ENCODE measurements at regions of chr12 and their contacts with region 1.

Region 1: GRCh38 chr12:46153268-46153872 is 115.5 kb downstream of the SLC38A1 start:
- DNase-seq: peak; percentile 56
- ATAC-seq: no peak
- H3K4me3 ChIP-seq: peak overlapping the region in 1 of 5 experiments; percentile 12
- H3K4me3 Mint-ChIP-seq: no peak overlapping the region
- H3K27ac ChIP-seq: no peak overlapping the region
- H3K27ac Mint-ChIP-seq: no peak overlapping the region
- H3K4me1 ChIP-seq: peaks cover 11 to 16% of the 10 kb centered on the region in 2 donors
- H3K4me1 Mint-ChIP-seq: peaks cover 26% of the 10 kb centered on the region
- H3K27me3 ChIP-seq: no peaks in the 10 kb centered on the region
- H3K27me3 Mint-ChIP-seq: peaks cover 4% of the 10 kb centered on the region
- CTCF ChIP-seq: peak; percentile 93

Region 2: GRCh38 chr12:45290204-45290580 is 863.2 kb before region 1 on chr12:
- CTCF ChIA-PET with region 1: no interaction called
- POLR2A ChIA-PET with region 1: no interaction called
- intact Hi-C with region 1: no loop called
- DNase-seq: no peak
- ATAC-seq: no peak
- H3K4me3 ChIP-seq: no peak overlapping the region
- H3K4me3 Mint-ChIP-seq: no peak overlapping the region
- H3K27ac ChIP-seq: no peak overlapping the region
- H3K27ac Mint-ChIP-seq: no peak overlapping the region
- H3K4me1 ChIP-seq: peaks cover 5 to 6% of the 10 kb centered on the region in 2 donors
- H3K4me1 Mint-ChIP-seq: peaks cover 31% of the 10 kb centered on the region
- H3K27me3 ChIP-seq: no peaks in the 10 kb centered on the region
- H3K27me3 Mint-ChIP-seq: no peaks in the 10 kb centered on the region
- CTCF ChIP-seq: no peak

Region 3: DNA sequence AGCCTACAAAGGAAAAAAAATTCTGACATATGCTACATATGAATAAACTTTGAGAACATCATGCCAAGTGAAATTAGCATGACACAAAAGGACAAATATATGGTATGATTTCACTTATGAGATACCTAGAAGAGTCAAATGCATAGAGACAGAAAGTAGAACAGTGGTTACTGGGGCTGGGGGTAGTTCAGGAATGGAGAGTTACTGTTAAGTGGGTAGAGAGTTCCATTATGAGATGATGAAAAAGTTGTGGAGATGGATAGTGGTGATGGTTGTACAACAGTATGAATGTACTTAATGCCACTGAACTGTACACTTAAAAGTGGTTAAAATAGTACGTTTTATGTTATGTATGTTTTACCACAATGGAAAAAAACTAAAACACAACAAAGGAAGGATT is 255.3 kb before region 1 on chr12:
- CTCF ChIA-PET with region 1: no interaction called
- POLR2A ChIA-PET with region 1: no interaction called
- intact Hi-C with region 1: no loop called
- DNase-seq: no peak
- ATAC-seq: no peak
- H3K4me3 ChIP-seq: no peak overlapping the region
- H3K4me3 Mint-ChIP-seq: no peak overlapping the region
- H3K27ac ChIP-seq: no peak overlapping the region
- H3K27ac Mint-ChIP-seq: no peak overlapping the region
- H3K4me1 ChIP-seq: no peaks in the 10 kb centered on the region
- H3K4me1 Mint-ChIP-seq: no peaks in the 10 kb centered on the region
- H3K27me3 ChIP-seq: no peaks in the 10 kb centered on the region
- H3K27me3 Mint-ChIP-seq: no peaks in the 10 kb centered on the region
- CTCF ChIP-seq: no peak

Region 4: GRCh38 chr12:46209914-46210872 is 56.8 kb after region 1 on chr12:
- CTCF ChIA-PET with region 1: interaction called, 5 read pairs
- POLR2A ChIA-PET with region 1: no interaction called
- intact Hi-C with region 1: loop called (anchors 5 kb)
- DNase-seq: peak; percentile 77
- ATAC-seq: peak; percentile 72
- H3K4me3 ChIP-seq: peak overlapping the region in 1 of 5 experiments; percentile 9
- H3K4me3 Mint-ChIP-seq: peak overlapping the region; percentile 68
- H3K27ac ChIP-seq: peak overlapping the region; percentile 84 to 96
- H3K27ac Mint-ChIP-seq: peak overlapping the region; percentile 92
- H3K4me1 ChIP-seq: peaks cover 74 to 88% of the 10 kb centered on the region in 2 donors
- H3K4me1 Mint-ChIP-seq: peaks cover 89% of the 10 kb centered on the region
- H3K27me3 ChIP-seq: no peaks in the 10 kb centered on the region
- H3K27me3 Mint-ChIP-seq: no peaks in the 10 kb centered on the region
- CTCF ChIP-seq: no peak

Region 5: GRCh38 chr12:46303039-46303666 is 149.8 kb after region 1 on chr12:
- CTCF ChIA-PET with region 1: interaction called, 49 read pairs
- POLR2A ChIA-PET with region 1: no interaction called
- intact Hi-C with region 1: loop called (anchors 1 kb)
- DNase-seq: peak; percentile 73
- ATAC-seq: peak; percentile 71
- H3K4me3 ChIP-seq: no peak overlapping the region
- H3K4me3 Mint-ChIP-seq: no peak overlapping the region
- H3K27ac ChIP-seq: no peak overlapping the region
- H3K27ac Mint-ChIP-seq: peak overlapping the region; percentile 28
- H3K4me1 ChIP-seq: peaks cover 19 to 20% of the 10 kb centered on the region in 2 donors
- H3K4me1 Mint-ChIP-seq: peaks cover 29% of the 10 kb centered on the region
- H3K27me3 ChIP-seq: no peaks in the 10 kb centered on the region
- H3K27me3 Mint-ChIP-seq: no peaks in the 10 kb centered on the region
- CTCF ChIP-seq: peak; percentile 72

Region 6: GRCh38 chr12:46661110-46661845 is 507.9 kb after region 1 on chr12:
- CTCF ChIA-PET with region 1: interaction called, 7 read pairs
- POLR2A ChIA-PET with region 1: no interaction called
- intact Hi-C with region 1: loop called (anchors 1 kb)
- DNase-seq: peak; percentile 70
- ATAC-seq: peak; percentile 88
- H3K4me3 ChIP-seq: peak overlapping the region in 3 of 5 experiments; percentile 1 to 16 (median 7)
- H3K4me3 Mint-ChIP-seq: peak overlapping the region; percentile 29
- H3K27ac ChIP-seq: no peak overlapping the region
- H3K27ac Mint-ChIP-seq: peak overlapping the region; percentile 64
- H3K4me1 ChIP-seq: peaks cover 21 to 27% of the 10 kb centered on the region in 2 donors
- H3K4me1 Mint-ChIP-seq: peaks cover 28% of the 10 kb centered on the region
- H3K27me3 ChIP-seq: no peaks in the 10 kb centered on the region
- H3K27me3 Mint-ChIP-seq: no peaks in the 10 kb centered on the region
- CTCF ChIP-seq: peak; percentile 70

Region 7: DNA sequence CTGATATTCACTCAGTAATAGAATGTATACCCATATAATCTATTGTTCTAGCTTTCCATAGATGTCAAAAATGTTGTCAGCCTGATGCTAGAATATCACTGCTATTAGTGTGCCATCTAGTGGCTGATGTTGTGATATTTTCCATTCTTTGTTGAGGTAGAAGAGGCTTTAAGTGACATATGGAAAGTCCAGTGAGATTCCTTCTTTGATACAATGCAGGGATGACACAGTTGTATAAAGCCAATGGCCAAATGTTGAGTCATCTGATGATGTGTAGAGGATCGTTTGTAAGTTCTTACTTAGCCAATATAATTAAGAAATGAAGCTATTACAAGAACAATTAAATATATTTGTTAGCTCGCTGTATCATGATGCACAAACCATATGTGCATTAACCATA is 867.9 kb after region 1 on chr12:
- CTCF ChIA-PET with region 1: interaction called, 3 read pairs
- POLR2A ChIA-PET with region 1: no interaction called
- intact Hi-C with region 1: loop called (anchors 1 kb)
- DNase-seq: peak; percentile 70
- ATAC-seq: peak; percentile 28
- H3K4me3 ChIP-seq: no peak overlapping the region
- H3K4me3 Mint-ChIP-seq: no peak overlapping the region
- H3K27ac ChIP-seq: no peak overlapping the region
- H3K27ac Mint-ChIP-seq: no peak overlapping the region
- H3K4me1 ChIP-seq: no peaks in the 10 kb centered on the region
- H3K4me1 Mint-ChIP-seq: no peaks in the 10 kb centered on the region
- H3K27me3 ChIP-seq: peaks cover 0 to 3% (median under 1%) of the 10 kb centered on the region in 4 experiments
- H3K27me3 Mint-ChIP-seq: peaks cover 9% of the 10 kb centered on the region
- CTCF ChIP-seq: peak; percentile 88